Sciatic nerve (tissue), 2 donors: ENCODE measurements at regions of chr18 and their contacts with region 1.

Region 1: GRCh38 chr18:4931209-4931608 is 265.8 kb downstream of the AKAIN1 start:
- DNase-seq: no peak
- ATAC-seq: no peak

Region 2: DNA sequence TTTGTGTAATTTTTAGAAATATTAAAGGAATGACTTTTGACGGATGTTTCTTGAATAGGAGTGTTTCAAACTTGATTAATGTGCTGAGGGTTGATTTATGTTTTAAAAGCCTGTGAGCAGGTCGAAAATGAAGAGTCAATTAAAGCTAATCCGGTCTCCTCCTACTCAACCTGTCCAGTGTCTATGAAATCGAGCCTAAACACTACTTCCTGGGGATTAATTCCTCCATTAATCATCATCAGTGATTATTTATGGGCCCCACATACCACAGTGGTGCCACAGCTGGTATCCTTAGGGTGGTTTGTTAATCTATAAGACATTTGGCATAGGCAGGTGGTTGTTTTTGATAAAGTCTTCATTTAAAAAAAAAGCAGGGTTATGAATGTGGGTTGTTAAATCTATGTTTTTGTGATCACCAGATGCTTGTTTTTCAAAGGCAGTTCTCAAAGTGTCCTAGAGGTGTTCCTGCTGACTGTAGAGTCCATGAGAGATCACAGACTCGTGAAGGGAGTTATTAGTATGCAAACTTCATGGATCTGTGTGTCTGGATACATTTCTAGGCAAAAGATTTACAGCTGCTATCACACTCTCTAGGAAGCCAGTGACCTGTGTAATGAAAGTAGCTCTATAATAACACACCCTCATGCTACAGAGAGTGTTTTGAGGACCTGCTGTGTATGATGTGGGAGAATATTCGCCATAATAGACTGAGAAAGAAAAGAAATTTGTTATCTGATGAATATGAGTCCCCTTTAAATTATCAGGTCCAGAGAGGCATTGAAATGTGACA is 42.8 kb before region 1 on chr18:
- intact Hi-C with region 1: loop called (anchors 1 kb)
- DNase-seq: no peak
- ATAC-seq: no peak

Region 3: DNA sequence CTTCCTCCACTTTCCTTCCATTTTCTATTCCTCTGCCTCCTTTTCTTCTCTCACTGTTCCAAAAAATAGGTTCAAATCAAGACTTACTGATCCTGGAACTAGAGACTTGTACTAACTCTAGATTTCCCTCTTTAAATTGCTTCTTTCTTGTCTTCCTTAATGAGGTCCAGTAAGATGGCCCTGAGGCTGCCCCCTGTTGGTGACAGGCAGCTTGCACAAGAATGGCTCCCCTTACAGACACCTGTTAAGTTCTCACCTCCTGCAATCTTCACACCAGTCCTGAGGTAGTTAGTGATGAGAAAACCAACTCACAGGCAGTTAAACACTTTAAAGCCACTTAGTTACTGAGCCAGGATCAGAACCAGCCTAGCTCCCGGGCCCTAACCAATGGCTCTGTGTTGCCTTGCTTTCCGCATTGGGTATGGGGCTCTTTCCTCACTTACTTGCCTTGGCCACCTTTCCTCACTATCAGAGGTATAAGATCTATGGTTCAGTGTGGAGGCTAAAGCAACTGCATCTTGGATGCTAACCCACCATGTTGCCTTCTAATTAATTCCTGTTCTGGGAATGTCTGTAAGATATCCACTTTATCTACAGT is 135.3 kb after region 1 on chr18:
- intact Hi-C with region 1: no loop called
- DNase-seq: no peak
- ATAC-seq: no peak